ENCODE measurements at regions of chr10 and their contacts with region 1.

Region 1: GRCh38 chr10:71893920-71894319 is 42.9 kb upstream of the PSAP start:
- DNase-seq: no peak
- ATAC-seq: no peak
- H3K4me3 ChIP-seq: no peak overlapping the region
- H3K4me3 Mint-ChIP-seq: no peak overlapping the region
- H3K27ac ChIP-seq: no peak overlapping the region
- H3K27ac Mint-ChIP-seq: no peak overlapping the region
- H3K4me1 ChIP-seq: peaks cover 5% of the 10 kb centered on the region
- H3K4me1 Mint-ChIP-seq: peaks cover 4% of the 10 kb centered on the region
- H3K27me3 ChIP-seq: no peaks in the 10 kb centered on the region
- H3K27me3 Mint-ChIP-seq: peaks cover 4% of the 10 kb centered on the region
- CTCF ChIP-seq: no peak

Region 2: DNA sequence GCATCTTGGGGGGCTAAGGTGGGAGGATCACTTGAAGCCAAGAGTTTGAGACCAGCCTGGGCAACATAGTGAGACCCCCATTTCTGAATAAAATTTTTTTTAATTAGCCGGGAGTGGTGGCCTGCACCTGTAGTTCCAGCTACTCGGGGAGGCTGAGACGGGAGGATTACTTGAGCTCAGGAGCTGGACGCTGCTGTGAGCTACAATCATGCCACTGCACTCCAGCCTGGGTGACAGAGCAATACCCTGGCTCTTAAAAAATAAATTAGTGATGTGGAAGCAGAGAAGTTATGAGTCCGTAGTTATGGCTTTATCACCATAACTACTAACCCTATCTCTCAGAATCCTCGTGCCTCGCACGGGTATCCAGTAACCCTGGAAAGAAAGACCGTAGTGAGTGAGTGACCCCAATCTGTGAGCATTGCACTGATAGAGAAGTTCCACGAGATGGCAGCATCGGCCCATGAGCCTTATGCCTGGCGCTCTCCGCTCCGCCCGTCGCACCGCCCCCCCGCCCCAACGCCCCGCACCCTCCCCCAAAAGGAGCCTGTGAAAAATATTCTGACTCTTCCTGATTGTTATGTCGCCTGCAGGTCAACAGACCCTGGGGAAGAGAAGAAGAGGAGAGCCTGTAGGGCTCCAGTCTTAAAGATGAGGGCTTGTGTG is 579.8 kb before region 1 on chr10:
- CTCF ChIA-PET with region 1: no interaction called
- POLR2A ChIA-PET with region 1: no interaction called
- intact Hi-C with region 1: loop called (anchors 1 to 2 kb)
- DNase-seq: peak in 8 of 9 experiments; percentile 41 to 80 (median 62)
- ATAC-seq: peak; percentile 45
- H3K4me3 ChIP-seq: no peak overlapping the region
- H3K4me3 Mint-ChIP-seq: no peak overlapping the region
- H3K27ac ChIP-seq: no peak overlapping the region
- H3K27ac Mint-ChIP-seq: no peak overlapping the region
- H3K4me1 ChIP-seq: peaks cover 6% of the 10 kb centered on the region
- H3K4me1 Mint-ChIP-seq: peaks cover 11% of the 10 kb centered on the region
- H3K27me3 ChIP-seq: no peaks in the 10 kb centered on the region
- H3K27me3 Mint-ChIP-seq: peaks cover 7% of the 10 kb centered on the region
- CTCF ChIP-seq: peak; percentile 86

Region 3: GRCh38 chr10:71649651-71650050 is 244.3 kb before region 1 on chr10:
- CTCF ChIA-PET with region 1: no interaction called
- POLR2A ChIA-PET with region 1: no interaction called
- intact Hi-C with region 1: no loop called
- DNase-seq: no peak
- ATAC-seq: no peak
- H3K4me3 ChIP-seq: no peak overlapping the region
- H3K4me3 Mint-ChIP-seq: no peak overlapping the region
- H3K27ac ChIP-seq: no peak overlapping the region
- H3K27ac Mint-ChIP-seq: no peak overlapping the region
- H3K4me1 ChIP-seq: no peaks in the 10 kb centered on the region
- H3K4me1 Mint-ChIP-seq: no peaks in the 10 kb centered on the region
- H3K27me3 ChIP-seq: no peaks in the 10 kb centered on the region
- H3K27me3 Mint-ChIP-seq: no peaks in the 10 kb centered on the region
- CTCF ChIP-seq: no peak

Region 4: DNA sequence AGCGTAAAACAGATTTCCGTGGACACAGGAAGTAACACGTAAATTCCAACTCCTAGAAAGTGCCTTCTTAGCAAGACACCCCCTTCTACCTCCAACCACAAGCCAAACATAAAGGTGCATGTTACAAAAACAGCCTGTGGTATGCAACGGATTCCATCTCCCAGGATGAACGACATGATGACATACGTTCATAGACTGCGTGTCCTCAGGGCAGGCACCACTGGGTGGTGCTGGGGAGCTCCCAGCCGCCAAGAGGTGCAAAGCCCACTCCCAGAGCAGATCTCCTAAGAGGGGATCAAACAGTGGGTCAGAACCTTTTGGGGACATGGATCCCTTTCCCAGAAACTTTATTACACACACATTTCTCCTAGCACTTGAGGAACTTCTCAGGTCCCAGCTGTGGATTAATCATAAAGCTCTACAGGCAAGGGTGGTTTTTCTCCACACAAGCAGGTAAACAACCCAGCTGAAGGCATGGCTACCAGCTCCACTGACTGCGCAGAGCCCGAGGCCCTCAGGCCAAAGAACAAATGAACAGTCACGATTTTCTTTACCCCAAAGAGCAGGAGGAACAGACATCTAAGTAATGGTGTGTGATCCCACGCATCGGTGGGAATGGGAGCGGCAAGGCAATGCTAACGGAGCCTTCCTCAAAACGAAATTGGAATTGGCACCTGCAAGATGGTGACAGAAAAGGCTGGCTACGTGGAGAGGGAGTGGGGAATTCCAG is 56.7 kb before region 1 on chr10:
- CTCF ChIA-PET with region 1: interaction called, 10 read pairs
- POLR2A ChIA-PET with region 1: no interaction called
- intact Hi-C with region 1: loop called (anchors 1 kb)
- DNase-seq: peak in 1 of 9 experiments; percentile 36
- ATAC-seq: peak; percentile 67
- H3K4me3 ChIP-seq: no peak overlapping the region
- H3K4me3 Mint-ChIP-seq: no peak overlapping the region
- H3K27ac ChIP-seq: no peak overlapping the region
- H3K27ac Mint-ChIP-seq: peak overlapping the region; percentile 39
- H3K4me1 ChIP-seq: peaks cover 11% of the 10 kb centered on the region
- H3K4me1 Mint-ChIP-seq: peaks cover 56% of the 10 kb centered on the region
- H3K27me3 ChIP-seq: no peaks in the 10 kb centered on the region
- H3K27me3 Mint-ChIP-seq: no peaks in the 10 kb centered on the region
- CTCF ChIP-seq: no peak

Region 5: DNA sequence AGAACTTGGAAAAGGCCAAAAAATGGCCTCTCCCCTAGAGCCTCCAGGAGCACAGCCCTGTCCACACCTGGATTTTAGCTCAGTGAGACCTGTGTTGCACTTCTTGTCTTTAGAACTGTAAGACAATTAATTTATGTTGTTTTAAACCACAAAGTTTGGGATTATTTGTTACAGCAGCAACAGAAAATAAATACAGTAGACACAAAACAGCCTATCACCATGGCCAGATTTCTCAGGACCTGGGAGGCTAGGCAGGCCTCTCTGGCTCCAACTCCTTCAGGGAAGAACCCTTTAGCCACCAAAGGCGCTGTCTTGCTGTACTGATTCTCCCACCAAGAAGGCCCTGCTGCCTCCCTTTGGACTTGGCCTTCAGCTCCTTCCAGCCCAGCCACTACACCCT is 11.2 kb after region 1 on chr10:
- CTCF ChIA-PET with region 1: interaction called, 23 read pairs
- POLR2A ChIA-PET with region 1: no interaction called
- intact Hi-C with region 1: no loop called
- DNase-seq: no peak
- ATAC-seq: no peak
- H3K4me3 ChIP-seq: no peak overlapping the region
- H3K4me3 Mint-ChIP-seq: no peak overlapping the region
- H3K27ac ChIP-seq: no peak overlapping the region
- H3K27ac Mint-ChIP-seq: no peak overlapping the region
- H3K4me1 ChIP-seq: no peaks in the 10 kb centered on the region
- H3K4me1 Mint-ChIP-seq: peaks cover 7% of the 10 kb centered on the region
- H3K27me3 ChIP-seq: no peaks in the 10 kb centered on the region
- H3K27me3 Mint-ChIP-seq: no peaks in the 10 kb centered on the region
- CTCF ChIP-seq: no peak

Region 6: GRCh38 chr10:71957546-71958275 is 63.8 kb after region 1 on chr10:
- CTCF ChIA-PET with region 1: interaction called, 18 read pairs
- POLR2A ChIA-PET with region 1: no interaction called
- intact Hi-C with region 1: no loop called
- DNase-seq: no peak
- ATAC-seq: no peak
- H3K4me3 ChIP-seq: no peak overlapping the region
- H3K4me3 Mint-ChIP-seq: no peak overlapping the region
- H3K27ac ChIP-seq: no peak overlapping the region
- H3K27ac Mint-ChIP-seq: no peak overlapping the region
- H3K4me1 ChIP-seq: no peaks in the 10 kb centered on the region
- H3K4me1 Mint-ChIP-seq: no peaks in the 10 kb centered on the region
- H3K27me3 ChIP-seq: peaks cover 0 to 2% of the 10 kb centered on the region in 2 experiments
- H3K27me3 Mint-ChIP-seq: peaks cover 14% of the 10 kb centered on the region
- CTCF ChIP-seq: no peak

Region 7: DNA sequence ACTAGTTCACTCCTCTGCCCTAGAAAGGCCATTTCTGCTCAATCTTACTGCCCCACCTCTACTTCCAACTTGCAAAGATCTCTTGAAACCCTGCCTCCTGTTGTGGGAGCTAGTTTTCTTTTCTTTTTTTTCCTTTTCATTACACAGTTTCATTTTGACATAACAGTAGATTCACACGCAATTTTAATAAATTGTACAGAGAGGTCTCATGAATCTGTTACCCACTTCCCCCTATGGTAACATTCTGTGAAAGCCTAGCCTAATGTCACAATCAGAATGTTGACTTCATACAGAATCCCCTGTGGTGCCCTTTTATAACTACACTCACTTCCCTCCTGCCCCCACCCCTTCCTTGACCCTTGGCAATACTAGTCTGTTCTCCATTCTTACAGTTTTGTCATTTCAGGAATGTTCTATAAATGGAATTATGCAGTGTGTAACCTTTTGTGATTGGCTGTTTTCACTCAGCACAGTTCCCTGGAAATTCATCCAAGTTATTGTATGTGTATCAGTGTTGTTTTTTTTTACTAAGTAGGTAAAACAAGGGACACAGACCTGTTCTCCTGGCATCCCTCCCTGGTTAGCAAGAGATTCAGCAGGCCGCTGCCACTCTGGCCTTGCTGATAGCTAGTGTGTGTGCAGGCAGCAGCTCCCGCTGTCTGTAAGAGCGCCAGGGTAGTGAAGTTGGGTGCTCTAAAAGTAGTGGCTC is 91.8 kb after region 1 on chr10:
- CTCF ChIA-PET with region 1: interaction called, 13 read pairs
- POLR2A ChIA-PET with region 1: no interaction called
- intact Hi-C with region 1: no loop called
- DNase-seq: no peak
- ATAC-seq: no peak
- H3K4me3 ChIP-seq: no peak overlapping the region
- H3K4me3 Mint-ChIP-seq: no peak overlapping the region
- H3K27ac ChIP-seq: no peak overlapping the region
- H3K27ac Mint-ChIP-seq: no peak overlapping the region
- H3K4me1 ChIP-seq: no peaks in the 10 kb centered on the region
- H3K4me1 Mint-ChIP-seq: no peaks in the 10 kb centered on the region
- H3K27me3 ChIP-seq: no peaks in the 10 kb centered on the region
- H3K27me3 Mint-ChIP-seq: no peaks in the 10 kb centered on the region
- CTCF ChIP-seq: no peak

Region 8: DNA sequence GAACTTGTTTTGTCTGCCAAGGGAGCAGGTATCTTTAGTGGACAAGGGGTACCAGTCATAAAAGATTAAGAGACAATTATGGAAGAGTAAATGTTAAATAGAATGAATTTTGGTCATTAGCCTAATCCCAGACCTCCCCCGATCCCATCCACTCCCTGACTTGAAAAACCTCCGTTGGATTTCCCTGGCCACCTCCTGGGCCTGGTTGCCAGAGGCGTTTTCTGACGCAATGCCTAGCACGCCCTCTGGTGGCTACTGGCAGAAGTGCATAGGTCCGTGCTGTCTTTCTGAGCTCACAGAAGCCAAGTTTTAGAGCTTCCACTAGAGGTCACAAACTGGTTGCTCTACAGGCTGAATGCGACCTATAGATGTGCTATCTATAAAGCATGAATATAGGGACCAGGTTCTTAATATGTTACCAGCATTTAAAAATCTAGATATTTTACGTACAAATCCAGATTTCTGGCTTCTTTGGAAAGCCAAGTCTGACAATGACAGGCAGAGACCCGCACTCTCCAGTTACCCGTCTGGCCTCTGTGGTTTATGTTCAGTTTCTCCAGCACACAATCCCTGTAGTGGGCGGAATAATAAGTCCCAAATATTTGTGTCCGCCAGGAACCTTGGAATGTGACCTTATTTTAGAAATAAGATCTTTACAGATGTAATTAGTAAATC is 154.7 kb after region 1 on chr10:
- CTCF ChIA-PET with region 1: interaction called, 110 read pairs
- POLR2A ChIA-PET with region 1: interaction called, 8 read pairs
- intact Hi-C with region 1: loop called (anchors 1 to 2 kb)
- DNase-seq: peak; percentile 80 to 95 (median 90)
- ATAC-seq: peak; percentile 98
- H3K4me3 ChIP-seq: no peak overlapping the region
- H3K4me3 Mint-ChIP-seq: no peak overlapping the region
- H3K27ac ChIP-seq: no peak overlapping the region
- H3K27ac Mint-ChIP-seq: no peak overlapping the region
- H3K4me1 ChIP-seq: no peaks in the 10 kb centered on the region
- H3K4me1 Mint-ChIP-seq: peaks cover 7% of the 10 kb centered on the region
- H3K27me3 ChIP-seq: no peaks in the 10 kb centered on the region
- H3K27me3 Mint-ChIP-seq: no peaks in the 10 kb centered on the region
- CTCF ChIP-seq: peak; percentile 99